ENCODE measurements at regions of chr3 and their contacts with region 1.

Region 1: DNA sequence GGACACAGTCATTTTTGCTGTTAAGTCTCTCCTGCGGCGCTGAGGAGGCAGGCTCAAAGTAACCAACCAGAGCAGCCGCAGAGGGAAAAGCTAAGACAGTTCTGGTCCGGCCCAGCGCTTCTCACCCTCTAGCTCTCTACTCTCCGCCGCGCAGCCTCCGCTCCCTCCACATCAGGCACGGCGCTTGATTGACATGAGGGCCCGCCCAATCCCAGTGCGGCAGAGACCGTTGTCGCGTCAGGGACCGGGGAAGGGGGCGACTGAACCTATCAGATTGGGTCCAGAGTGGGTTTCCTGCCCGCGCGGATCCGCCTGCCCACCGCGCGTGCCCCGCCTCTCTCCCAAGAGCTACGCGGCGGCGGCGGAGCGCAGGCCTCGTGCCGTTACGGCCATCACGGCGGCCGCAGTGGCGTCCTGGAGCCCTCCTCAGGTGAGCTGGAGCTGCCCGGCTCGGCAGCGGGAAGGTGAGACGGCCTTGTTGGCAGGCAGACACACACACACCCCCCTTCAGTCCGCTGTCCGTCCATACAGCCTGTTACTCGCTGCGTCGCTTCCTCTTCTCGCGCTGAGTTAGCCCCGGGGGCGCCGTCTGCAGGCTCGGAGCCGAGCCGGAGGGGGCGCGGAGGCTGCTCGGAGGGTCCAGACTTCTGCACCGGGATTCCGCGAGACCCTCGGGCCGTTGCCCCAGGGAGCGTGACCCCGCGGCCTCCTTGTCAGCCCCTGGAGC is at the start of gene NCK1:
- DNase-seq: peak; percentile 99
- H3K4me3 ChIP-seq: peak within 1 kb of the TSS; percentile 82 to 92 (median 86)
- H3K27ac ChIP-seq: peak within 1 kb of the TSS; percentile 94 to 96 (median 95)
- H3K4me1 ChIP-seq: peaks cover 17 to 32% (median 27%) of the 10 kb centered on the region in 4 donors
- H3K27me3 ChIP-seq: no peaks in the 10 kb centered on the region
- CTCF ChIP-seq: peak in 1 of 3 experiments; percentile 18
- EP300 ChIP-seq: no peak
- POLR2A ChIP-seq: no peak
- total RNA-seq, gene NCK1: 28.9 to 54.0 (median 37.0) TPM

Region 2: DNA sequence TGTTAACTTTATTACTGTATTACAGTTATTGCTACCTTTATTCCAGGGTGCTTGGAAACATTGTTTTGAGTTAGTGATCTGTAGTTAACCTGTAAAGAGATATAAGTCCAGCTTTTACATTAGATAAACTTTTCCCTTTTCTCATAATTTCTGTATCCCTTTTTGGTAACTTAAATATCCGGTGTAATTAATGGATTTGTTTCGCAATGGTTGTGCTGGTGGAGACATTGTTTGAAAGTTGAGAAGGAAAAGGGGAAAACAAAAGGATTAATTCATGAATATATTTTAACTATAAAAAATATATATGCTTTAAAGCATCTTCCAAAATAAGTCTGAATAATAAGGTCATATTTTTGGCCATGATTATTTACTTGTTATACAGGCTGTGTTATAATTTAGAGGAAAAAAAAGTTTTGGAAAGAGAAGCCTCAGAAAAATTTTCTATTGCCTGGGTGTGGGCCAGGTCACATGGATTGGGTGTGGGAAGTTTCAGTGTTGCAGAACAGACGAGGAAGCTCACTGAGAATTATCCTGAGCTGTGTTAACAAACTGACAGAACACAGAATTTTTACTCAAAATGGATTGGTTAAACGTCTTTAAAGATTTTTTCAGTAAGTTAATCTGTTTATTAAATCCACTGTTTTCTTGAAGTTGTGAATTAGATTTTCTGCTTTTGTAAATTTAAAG is 68.1 kb after region 1 on chr3:
- intact Hi-C with region 1: loop called (anchors 5 kb)
- DNase-seq: no peak
- H3K4me3 ChIP-seq: peak overlapping the region; percentile 34 to 46 (median 42)
- H3K27ac ChIP-seq: peak overlapping the region; percentile 46 to 63 (median 52)
- H3K4me1 ChIP-seq: peaks cover 15 to 69% (median 63%) of the 10 kb centered on the region in 4 donors
- H3K27me3 ChIP-seq: no peaks in the 10 kb centered on the region
- CTCF ChIP-seq: no peak
- EP300 ChIP-seq: no peak
- POLR2A ChIP-seq: no peak

Region 3: DNA sequence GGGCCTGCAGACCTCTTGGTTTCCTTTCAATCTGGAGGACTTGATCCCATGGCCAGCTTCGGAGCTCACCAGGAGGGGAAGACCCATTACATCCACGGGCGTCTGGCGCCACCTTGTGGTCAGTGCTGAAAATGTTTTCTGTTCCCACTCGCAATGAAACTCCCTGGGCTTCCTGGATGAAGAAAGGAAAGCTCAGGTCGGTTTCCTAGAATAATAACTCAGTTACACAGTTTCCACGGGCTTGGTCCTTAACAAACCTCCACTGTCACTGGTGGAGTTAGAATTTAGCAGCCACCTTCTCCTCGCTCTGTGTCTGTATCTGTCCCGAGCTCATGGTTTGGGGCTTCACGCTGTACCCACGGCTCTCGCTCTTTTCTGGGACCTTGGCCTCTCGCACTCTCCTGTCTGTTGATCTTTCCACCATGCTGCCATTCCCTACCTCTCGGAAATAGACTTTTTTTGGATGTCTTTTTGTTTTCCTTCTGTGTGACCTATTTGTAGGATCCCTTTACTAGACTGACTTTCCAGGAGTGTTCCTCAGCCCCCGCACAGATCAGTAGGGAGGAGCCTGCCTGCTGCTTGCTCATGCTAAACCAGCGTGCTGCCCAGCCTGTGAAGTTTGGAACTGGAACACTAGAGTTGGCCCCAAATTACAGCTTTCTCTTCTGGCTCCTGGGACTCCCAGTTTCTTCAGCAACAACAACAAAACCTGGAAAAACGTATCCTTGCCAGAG is 152.1 kb after region 1 on chr3:
- intact Hi-C with region 1: loop called (anchors 5 kb)
- DNase-seq: peak; percentile 98
- H3K4me3 ChIP-seq: peak overlapping the region; percentile 48 to 62 (median 52)
- H3K27ac ChIP-seq: peak overlapping the region; percentile 71 to 81 (median 73)
- H3K4me1 ChIP-seq: peaks cover 8 to 12% (median 9%) of the 10 kb centered on the region in 4 donors
- H3K27me3 ChIP-seq: no peaks in the 10 kb centered on the region
- CTCF ChIP-seq: peak; percentile 85 to 96 (median 91)
- EP300 ChIP-seq: no peak
- POLR2A ChIP-seq: no peak

Region 4: GRCh38 chr3:137249311-137249940 is 387.4 kb after region 1 on chr3:
- intact Hi-C with region 1: no loop called
- DNase-seq: no peak
- H3K4me3 ChIP-seq: no peak overlapping the region
- H3K27ac ChIP-seq: no peak overlapping the region
- H3K4me1 ChIP-seq: no peaks in the 10 kb centered on the region
- H3K27me3 ChIP-seq: no peaks in the 10 kb centered on the region
- CTCF ChIP-seq: no peak
- EP300 ChIP-seq: no peak
- POLR2A ChIP-seq: no peak

Measured in esophagus muscularis mucosa (tissue), 4 donors.